Head of caudate nucleus (tissue), 42 donors: ENCODE measurements at regions of chr18 and their contacts with region 1.

Region 1: GRCh38 chr18:24488824-24489493 is 28.5 kb downstream of the HRH4 start:
- DNase-seq: peak in 4 of 42 donors; percentile 12 to 59 (median 30)

Region 2: DNA sequence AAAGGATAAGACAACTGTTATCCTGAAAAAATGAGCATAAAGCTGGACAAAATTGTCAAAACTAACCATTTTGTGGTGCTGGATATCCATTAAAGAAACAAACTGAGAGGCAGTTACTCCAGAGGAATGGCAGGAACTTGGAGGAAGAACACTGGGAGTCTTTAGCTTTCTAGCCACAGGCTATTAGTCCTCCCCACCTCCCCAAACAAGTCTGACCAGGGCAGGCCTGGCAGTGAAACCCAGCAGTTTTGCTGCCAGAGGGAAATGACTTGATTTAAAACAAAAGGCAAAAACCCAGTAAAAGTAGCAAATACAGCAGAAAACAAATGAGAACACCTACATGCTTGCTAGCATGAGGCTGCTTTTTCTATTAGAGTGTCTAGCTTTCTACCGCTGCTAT is 126.2 kb before region 1 on chr18:
- intact Hi-C with region 1: loop called (anchors 5 kb)
- DNase-seq: peak in 2 of 42 donors; percentile 35 to 36